ENCODE measurements at regions of chr14 and their contacts with region 1.

Region 1: DNA sequence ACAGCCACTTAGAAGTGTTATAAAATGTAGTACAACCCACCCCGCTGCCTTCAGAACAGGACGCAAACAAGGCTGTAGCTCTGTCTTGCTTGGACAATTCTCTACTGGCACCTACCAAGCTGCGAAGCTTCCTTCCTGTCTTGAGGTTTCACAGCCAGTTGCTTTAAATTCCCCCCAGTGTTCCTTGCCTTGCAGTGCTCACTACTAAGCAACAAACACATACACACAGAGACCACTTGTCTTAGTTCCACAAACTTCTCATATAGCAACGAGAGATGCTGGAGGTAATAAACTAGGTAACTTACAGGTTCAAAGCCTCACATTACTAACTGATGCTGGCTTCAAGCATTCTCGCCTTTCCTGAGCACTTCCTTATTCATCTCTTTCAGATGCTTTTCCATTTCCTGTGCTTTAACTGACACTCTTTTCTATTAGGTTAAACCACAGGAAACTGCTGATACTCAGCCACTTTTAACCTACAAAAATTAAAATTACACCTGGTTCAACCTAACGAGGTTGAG is 91.5 kb upstream of the PTGDR start:
- DNase-seq: peak; percentile 87
- H3K4me3 ChIP-seq: peak overlapping the region; percentile 39
- H3K27ac ChIP-seq: peak overlapping the region; percentile 91
- H3K4me1 ChIP-seq: peaks cover 30% of the 10 kb centered on the region
- CTCF ChIP-seq: no peak

Region 2: DNA sequence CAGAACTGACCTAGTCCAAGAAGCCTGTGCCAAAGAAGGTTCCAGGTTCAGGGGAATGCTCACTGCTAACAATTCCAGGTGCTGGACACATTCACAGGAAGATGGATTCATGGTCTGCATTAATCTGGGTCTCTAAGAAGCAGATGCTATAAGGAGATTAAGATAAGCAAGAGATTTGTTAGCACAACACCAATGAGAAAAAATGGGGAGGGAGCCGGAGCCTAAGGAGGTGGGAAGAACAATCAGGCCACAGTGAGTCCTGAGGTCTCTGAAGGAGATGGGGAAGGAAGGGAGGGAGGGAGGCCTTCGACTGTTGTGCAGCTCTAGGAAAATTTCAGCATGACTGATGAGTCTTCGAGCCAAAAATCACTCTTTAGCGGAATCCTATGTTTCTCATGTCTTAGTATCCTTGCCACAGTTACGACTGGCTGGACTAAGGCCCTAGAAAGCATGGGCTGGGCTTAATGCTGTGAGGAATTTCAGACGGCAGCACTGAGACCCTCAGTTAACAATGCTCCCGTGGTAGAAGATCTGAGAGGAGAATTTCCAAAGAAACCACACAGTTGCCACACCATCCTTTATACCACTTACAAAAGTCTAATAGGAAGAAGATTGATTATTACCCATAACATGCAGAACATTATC is 59.9 kb after region 1 on chr14:
- CTCF ChIA-PET with region 1: no interaction called
- POLR2A ChIA-PET with region 1: no interaction called
- intact Hi-C with region 1: loop called (anchors 2 kb)
- DNase-seq: no peak
- H3K4me3 ChIP-seq: no peak overlapping the region
- H3K27ac ChIP-seq: no peak overlapping the region
- H3K4me1 ChIP-seq: peaks cover 11% of the 10 kb centered on the region
- CTCF ChIP-seq: no peak

Region 3: GRCh38 chr14:52895000-52895399 is 719.0 kb after region 1 on chr14:
- CTCF ChIA-PET with region 1: no interaction called
- POLR2A ChIA-PET with region 1: no interaction called
- intact Hi-C with region 1: no loop called
- DNase-seq: no peak
- H3K4me3 ChIP-seq: no peak overlapping the region
- H3K27ac ChIP-seq: no peak overlapping the region
- H3K4me1 ChIP-seq: no peaks in the 10 kb centered on the region
- CTCF ChIP-seq: no peak

Measured in OCI-LY7 (cell line).